CD4-positive, alpha-beta T cell (primary cell): ENCODE measurements at regions of chr1 and their contacts with region 1.

Region 1: GRCh38 chr1:226424228-226425003 is 16.5 kb upstream of the PARP1 start:
- DNase-seq: peak in 4 of 14 experiments; percentile 35 to 64 (median 59)
- ATAC-seq: peak; percentile 63
- H3K4me3 ChIP-seq: peak overlapping the region; percentile 54
- H3K4me3 Mint-ChIP-seq: no peak overlapping the region
- H3K27ac ChIP-seq: no peak overlapping the region
- H3K27ac Mint-ChIP-seq: no peak overlapping the region
- H3K4me1 ChIP-seq: peaks cover 40% of the 10 kb centered on the region
- H3K4me1 Mint-ChIP-seq: peaks cover 24% of the 10 kb centered on the region
- H3K27me3 ChIP-seq: peaks cover 0 to 2% of the 10 kb centered on the region in 2 experiments
- H3K27me3 Mint-ChIP-seq: no peaks in the 10 kb centered on the region
- CTCF ChIP-seq: peak; percentile 68

Region 2: GRCh38 chr1:226397011-226397926 is 27.1 kb before region 1 on chr1:
- CTCF ChIA-PET with region 1: no interaction called
- POLR2A ChIA-PET with region 1: no interaction called
- intact Hi-C with region 1: no loop called
- DNase-seq: no peak
- ATAC-seq: no peak
- H3K4me3 ChIP-seq: no peak overlapping the region
- H3K4me3 Mint-ChIP-seq: no peak overlapping the region
- H3K27ac ChIP-seq: no peak overlapping the region
- H3K27ac Mint-ChIP-seq: no peak overlapping the region
- H3K4me1 ChIP-seq: peaks cover 10% of the 10 kb centered on the region
- H3K4me1 Mint-ChIP-seq: peaks cover 54% of the 10 kb centered on the region
- H3K27me3 ChIP-seq: no peaks in the 10 kb centered on the region
- H3K27me3 Mint-ChIP-seq: no peaks in the 10 kb centered on the region
- CTCF ChIP-seq: no peak

Region 3: DNA sequence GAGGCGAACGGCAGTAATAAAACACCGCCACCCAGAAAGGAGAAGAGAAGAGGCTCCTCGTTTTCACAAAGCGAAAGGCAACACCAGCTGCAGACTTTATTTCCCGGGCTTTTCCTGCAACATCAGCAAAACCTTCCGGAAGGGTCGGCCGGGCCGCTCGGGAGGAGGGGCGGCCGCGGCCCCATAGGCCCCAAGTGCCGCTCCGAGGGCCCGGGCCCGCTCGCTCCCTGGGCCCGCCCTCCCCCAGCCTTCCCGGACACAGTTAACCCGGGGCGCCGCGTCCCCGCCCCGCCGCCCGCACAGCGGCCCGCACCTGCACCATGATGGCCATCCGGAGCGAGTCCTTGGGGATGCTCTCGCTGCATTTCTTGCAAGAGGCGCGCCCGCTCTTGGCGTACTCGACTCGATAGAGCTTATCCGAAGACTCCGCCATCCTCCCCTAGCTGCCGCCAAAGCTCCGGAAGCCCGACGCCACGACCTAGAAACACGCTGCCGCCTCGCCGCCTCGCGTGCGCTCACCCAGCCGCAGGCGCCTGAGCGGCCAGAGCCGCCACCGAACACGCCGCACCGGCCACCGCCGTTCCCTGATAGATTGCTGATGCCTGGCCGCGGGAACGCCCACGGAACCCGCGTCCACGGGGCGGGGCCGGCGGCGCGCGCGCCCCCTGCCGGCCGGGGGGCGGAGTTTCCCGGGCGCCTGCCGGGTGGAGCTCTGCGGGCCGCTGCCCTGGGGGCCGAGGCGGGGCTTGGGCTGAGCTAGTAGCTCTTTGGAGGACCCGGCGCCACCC is 16.7 kb before region 1 on chr1 and contains the start of gene PARP1:
- CTCF ChIA-PET with region 1: interaction called, 42 read pairs
- POLR2A ChIA-PET with region 1: interaction called, 102 read pairs
- intact Hi-C with region 1: loop called (anchors 2 kb)
- DNase-seq: peak; percentile 75 to 95 (median 85)
- ATAC-seq: peak; percentile 82
- H3K4me3 ChIP-seq: peak within 1 kb of the TSS; percentile 79
- H3K4me3 Mint-ChIP-seq: peak within 1 kb of the TSS; percentile 98
- H3K27ac ChIP-seq: peak within 1 kb of the TSS; percentile 48 to 55
- H3K27ac Mint-ChIP-seq: peak within 1 kb of the TSS; percentile 94
- H3K4me1 ChIP-seq: peaks cover 46% of the 10 kb centered on the region
- H3K4me1 Mint-ChIP-seq: peaks cover 55% of the 10 kb centered on the region
- H3K27me3 ChIP-seq: no peaks in the 10 kb centered on the region
- H3K27me3 Mint-ChIP-seq: no peaks in the 10 kb centered on the region
- CTCF ChIP-seq: peak; percentile 69
- total RNA-seq, gene PARP1: 59.3 to 63.6 TPM

Region 4: GRCh38 chr1:226444901-226445300 is 20.5 kb after region 1 on chr1:
- CTCF ChIA-PET with region 1: interaction called, 4 read pairs
- POLR2A ChIA-PET with region 1: interaction called, 40 read pairs
- intact Hi-C with region 1: loop called in 1 of 2 experiments (anchors 1 kb)
- DNase-seq: peak; percentile 37 to 89 (median 60)
- ATAC-seq: peak; percentile 99
- H3K4me3 ChIP-seq: no peak overlapping the region
- H3K4me3 Mint-ChIP-seq: peak overlapping the region; percentile 42
- H3K27ac ChIP-seq: peak overlapping the region in 1 of 2 donors; percentile 10
- H3K27ac Mint-ChIP-seq: peak overlapping the region; percentile 80
- H3K4me1 ChIP-seq: peaks cover 32% of the 10 kb centered on the region
- H3K4me1 Mint-ChIP-seq: peaks cover 35% of the 10 kb centered on the region
- H3K27me3 ChIP-seq: no peaks in the 10 kb centered on the region
- H3K27me3 Mint-ChIP-seq: no peaks in the 10 kb centered on the region
- CTCF ChIP-seq: peak; percentile 45

Region 5: DNA sequence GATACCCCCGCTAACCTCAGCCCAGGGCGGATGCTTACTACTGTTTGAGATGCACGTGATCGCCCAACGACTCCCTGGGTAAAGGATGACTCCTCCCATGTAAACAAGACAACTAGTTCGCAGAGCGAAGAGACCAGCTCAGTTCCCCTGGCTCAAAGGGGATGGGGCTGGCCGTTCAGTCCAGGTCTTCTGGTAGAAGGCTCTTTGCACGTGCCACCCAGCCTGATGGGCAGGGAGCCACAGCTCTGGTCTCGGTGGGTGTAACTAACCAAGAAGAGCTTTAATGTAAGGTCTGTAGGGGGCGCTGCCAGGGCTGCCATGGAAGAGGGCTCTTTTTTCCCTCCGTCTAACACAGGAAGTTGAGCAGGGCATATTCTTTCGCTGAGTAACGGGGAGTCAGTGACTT is 32.9 kb after region 1 on chr1:
- CTCF ChIA-PET with region 1: interaction called, 6 read pairs
- POLR2A ChIA-PET with region 1: interaction called, 25 read pairs
- intact Hi-C with region 1: no loop called
- DNase-seq: peak; percentile 17 to 73 (median 40)
- ATAC-seq: peak; percentile 89
- H3K4me3 ChIP-seq: peak overlapping the region; percentile 38
- H3K4me3 Mint-ChIP-seq: peak overlapping the region; percentile 88
- H3K27ac ChIP-seq: no peak overlapping the region
- H3K27ac Mint-ChIP-seq: peak overlapping the region; percentile 81
- H3K4me1 ChIP-seq: peaks cover 9% of the 10 kb centered on the region
- H3K4me1 Mint-ChIP-seq: peaks cover 14% of the 10 kb centered on the region
- H3K27me3 ChIP-seq: no peaks in the 10 kb centered on the region
- H3K27me3 Mint-ChIP-seq: no peaks in the 10 kb centered on the region
- CTCF ChIP-seq: peak; percentile 57

Region 6: GRCh38 chr1:226547754-226548191 is 123.4 kb after region 1 on chr1:
- CTCF ChIA-PET with region 1: no interaction called
- POLR2A ChIA-PET with region 1: interaction called, 4 read pairs
- intact Hi-C with region 1: loop called (anchors 1 to 5 kb)
- DNase-seq: peak; percentile 33 to 81 (median 56)
- ATAC-seq: peak; percentile 66
- H3K4me3 ChIP-seq: peak overlapping the region; percentile 42
- H3K4me3 Mint-ChIP-seq: peak overlapping the region; percentile 32
- H3K27ac ChIP-seq: no peak overlapping the region
- H3K27ac Mint-ChIP-seq: no peak overlapping the region
- H3K4me1 ChIP-seq: peaks cover 24% of the 10 kb centered on the region
- H3K4me1 Mint-ChIP-seq: peaks cover 14% of the 10 kb centered on the region
- H3K27me3 ChIP-seq: peaks cover 34 to 35% of the 10 kb centered on the region in 2 experiments
- H3K27me3 Mint-ChIP-seq: peaks cover 49% of the 10 kb centered on the region
- CTCF ChIP-seq: peak; percentile 85

Region 7: GRCh38 chr1:226608699-226609505 is 184.5 kb after region 1 on chr1:
- CTCF ChIA-PET with region 1: interaction called, 3 read pairs
- POLR2A ChIA-PET with region 1: interaction called, 4 read pairs
- intact Hi-C with region 1: loop called (anchors 1 to 5 kb)
- DNase-seq: peak; percentile 45 to 84 (median 62)
- ATAC-seq: peak; percentile 80
- H3K4me3 ChIP-seq: no peak overlapping the region
- H3K4me3 Mint-ChIP-seq: no peak overlapping the region
- H3K27ac ChIP-seq: no peak overlapping the region
- H3K27ac Mint-ChIP-seq: no peak overlapping the region
- H3K4me1 ChIP-seq: peaks cover 4% of the 10 kb centered on the region
- H3K4me1 Mint-ChIP-seq: no peaks in the 10 kb centered on the region
- H3K27me3 ChIP-seq: no peaks in the 10 kb centered on the region
- H3K27me3 Mint-ChIP-seq: no peaks in the 10 kb centered on the region
- CTCF ChIP-seq: peak; percentile 93